Colonic mucosa (tissue), 4 donors: ENCODE measurements at regions of chr15 and their contacts with region 1.

Region 1: GRCh38 chr15:31488426-31489204 is 162.0 kb downstream of the KLF13 start:
- DNase-seq: peak; percentile 81
- H3K4me3 ChIP-seq: no peak overlapping the region
- H3K27ac ChIP-seq: no peak overlapping the region
- H3K4me1 ChIP-seq: peaks cover 15% of the 10 kb centered on the region
- H3K27me3 ChIP-seq: no peaks in the 10 kb centered on the region
- CTCF ChIP-seq: peak; percentile 79

Region 2: GRCh38 chr15:31200735-31201151 is 287.9 kb before region 1 on chr15:
- intact Hi-C with region 1: loop called (anchors 5 kb)
- DNase-seq: peak; percentile 83
- H3K4me3 ChIP-seq: no peak overlapping the region
- H3K27ac ChIP-seq: no peak overlapping the region
- H3K4me1 ChIP-seq: no peaks in the 10 kb centered on the region
- H3K27me3 ChIP-seq: no peaks in the 10 kb centered on the region
- CTCF ChIP-seq: no peak

Region 3: DNA sequence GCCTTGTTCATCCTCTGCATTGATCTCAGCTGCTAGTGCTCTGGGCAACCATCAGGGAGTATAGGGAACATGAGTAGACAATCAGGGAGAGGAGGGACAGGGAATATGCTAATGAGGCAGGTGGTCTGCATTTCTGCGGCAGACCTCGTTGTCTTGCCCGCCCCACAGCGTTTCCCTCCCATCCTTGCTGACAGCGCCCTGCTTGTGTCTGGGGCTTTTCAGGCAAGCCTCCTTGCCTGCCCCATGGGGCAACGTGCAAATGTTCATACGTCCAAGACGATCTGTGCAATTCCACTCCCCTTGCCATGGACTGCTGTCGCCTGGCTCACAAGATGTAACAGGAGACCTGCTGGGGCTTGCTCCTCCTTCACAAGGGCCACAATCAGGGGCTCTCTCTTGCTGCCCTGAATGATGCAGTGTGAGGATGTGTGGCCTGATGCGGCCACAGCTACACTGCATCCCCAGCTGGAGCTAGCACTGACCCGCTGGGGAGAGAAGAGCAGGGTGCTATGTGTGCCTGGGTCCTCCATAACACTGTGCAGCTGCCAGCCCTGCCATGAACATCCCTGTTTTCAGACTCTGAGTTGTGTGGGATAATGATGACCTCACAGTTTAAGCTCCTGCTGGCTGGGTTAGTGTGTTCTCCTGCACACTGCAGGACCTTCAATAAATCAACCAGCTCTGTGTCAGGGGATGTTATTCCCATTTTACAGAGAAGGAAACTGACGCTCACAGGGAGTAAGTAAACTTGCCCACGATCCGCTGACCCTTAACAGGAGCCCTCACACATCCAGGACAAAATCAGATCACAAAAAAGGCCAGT is 49.4 kb after region 1 on chr15:
- intact Hi-C with region 1: no loop called
- DNase-seq: no peak
- H3K4me3 ChIP-seq: no peak overlapping the region
- H3K27ac ChIP-seq: no peak overlapping the region
- H3K4me1 ChIP-seq: no peaks in the 10 kb centered on the region
- H3K27me3 ChIP-seq: no peaks in the 10 kb centered on the region
- CTCF ChIP-seq: no peak